Esophagus muscularis mucosa (tissue), 4 donors: ENCODE measurements at regions of chr1 and their contacts with region 1.

Region 1: GRCh38 chr1:24108334-24109165 is 3.4 kb downstream of the MYOM3 start:
- DNase-seq: no peak
- H3K4me3 ChIP-seq: no peak overlapping the region
- H3K27ac ChIP-seq: peak overlapping the region in 3 of 4 donors; percentile 39 to 60 (median 43)
- H3K4me1 ChIP-seq: peaks cover 23 to 68% (median 41%) of the 10 kb centered on the region in 4 donors
- H3K27me3 ChIP-seq: no peaks in the 10 kb centered on the region
- CTCF ChIP-seq: no peak
- EP300 ChIP-seq: no peak
- POLR2A ChIP-seq: peak; percentile 23

Region 2: GRCh38 chr1:24070821-24071393 is 37.6 kb before region 1 on chr1:
- intact Hi-C with region 1: loop called (anchors 2 kb)
- DNase-seq: peak; percentile 94
- H3K4me3 ChIP-seq: no peak overlapping the region
- H3K27ac ChIP-seq: no peak overlapping the region
- H3K4me1 ChIP-seq: peaks cover 9 to 11% (median 9%) of the 10 kb centered on the region in 4 donors
- H3K27me3 ChIP-seq: peaks cover 0 to 4% (median 0%) of the 10 kb centered on the region in 4 donors
- CTCF ChIP-seq: peak; percentile 88 to 91 (median 91)
- EP300 ChIP-seq: no peak
- POLR2A ChIP-seq: no peak

Region 3: GRCh38 chr1:24150234-24151174 is 42.0 kb after region 1 on chr1:
- intact Hi-C with region 1: no loop called
- DNase-seq: peak; percentile 97
- H3K4me3 ChIP-seq: peak overlapping the region; percentile 11 to 31 (median 24)
- H3K27ac ChIP-seq: peak overlapping the region in 1 of 4 donors; percentile 56
- H3K4me1 ChIP-seq: peaks cover 7 to 14% (median 10%) of the 10 kb centered on the region in 4 donors
- H3K27me3 ChIP-seq: peaks cover 0 to 41% (median 0%) of the 10 kb centered on the region in 4 donors
- CTCF ChIP-seq: peak; percentile 80 to 95 (median 91)
- EP300 ChIP-seq: no peak
- POLR2A ChIP-seq: no peak

Region 4: GRCh38 chr1:24275510-24275909 is 167.0 kb after region 1 on chr1:
- intact Hi-C with region 1: no loop called
- DNase-seq: no peak
- H3K4me3 ChIP-seq: no peak overlapping the region
- H3K27ac ChIP-seq: no peak overlapping the region
- H3K4me1 ChIP-seq: no peaks in the 10 kb centered on the region
- H3K27me3 ChIP-seq: peaks cover 0 to 22% (median 0%) of the 10 kb centered on the region in 4 donors
- CTCF ChIP-seq: no peak
- EP300 ChIP-seq: no peak
- POLR2A ChIP-seq: no peak